Activated T-helper 1 cell treated with anti-CD3 and anti-CD28 coated beads, Interleukin-12 subunit alpha, Interleukin-12 subunit beta, Interleukin-2, Interleukin-4 antibody, amounts not matched to agents 30 ng/mL and 10 ng/mL and 1 ng/mL, durations not matched to agents 14 hours and 24 hours and 36 hours (primary cell): ENCODE measurements at regions of chr4 and their contacts with region 1.

Region 1: DNA sequence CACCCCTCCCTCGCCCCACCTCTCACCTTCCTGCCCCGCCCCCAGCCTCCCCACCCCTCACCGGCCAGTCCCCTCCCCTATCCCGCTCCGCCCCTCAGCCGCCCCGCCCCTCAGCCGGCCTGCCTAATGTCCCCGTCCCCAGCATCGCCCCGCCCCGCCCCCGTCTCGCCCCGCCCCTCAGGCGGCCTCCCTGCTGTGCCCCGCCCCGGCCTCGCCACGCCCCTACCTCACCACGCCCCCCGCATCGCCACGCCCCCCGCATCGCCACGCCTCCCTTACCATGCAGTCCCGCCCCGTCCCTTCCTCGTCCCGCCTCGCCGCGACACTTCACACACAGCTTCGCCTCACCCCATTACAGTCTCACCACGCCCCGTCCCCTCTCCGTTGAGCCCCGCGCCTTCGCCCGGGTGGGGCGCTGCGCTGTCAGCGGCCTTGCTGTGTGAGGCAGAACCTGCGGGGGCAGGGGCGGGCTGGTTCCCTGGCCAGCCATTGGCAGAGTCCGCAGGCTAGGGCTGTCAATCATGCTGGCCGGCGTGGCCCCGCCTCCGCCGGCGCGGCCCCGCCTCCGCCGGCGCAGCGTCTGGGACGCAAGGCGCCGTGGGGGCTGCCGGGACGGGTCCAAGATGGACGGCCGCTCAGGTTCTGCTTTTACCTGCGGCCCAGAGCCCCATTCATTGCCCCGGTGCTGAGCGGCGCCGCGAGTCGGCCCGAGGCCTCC is at the starts of genes HTT and HTT-AS:
- DNase-seq: peak; percentile 90
- H3K4me3 Mint-ChIP-seq: peak within 1 kb of the TSS; percentile 89
- H3K27ac Mint-ChIP-seq: peak within 1 kb of the TSS; percentile 90
- H3K4me1 Mint-ChIP-seq: peaks cover 27% of the 10 kb centered on the region
- H3K27me3 Mint-ChIP-seq: no peaks in the 10 kb centered on the region
- total RNA-seq, gene HTT: 65.9 and 66.9 TPM in 2 replicates
- total RNA-seq, gene HTT-AS: not detected in 2 replicates

Region 2: DNA sequence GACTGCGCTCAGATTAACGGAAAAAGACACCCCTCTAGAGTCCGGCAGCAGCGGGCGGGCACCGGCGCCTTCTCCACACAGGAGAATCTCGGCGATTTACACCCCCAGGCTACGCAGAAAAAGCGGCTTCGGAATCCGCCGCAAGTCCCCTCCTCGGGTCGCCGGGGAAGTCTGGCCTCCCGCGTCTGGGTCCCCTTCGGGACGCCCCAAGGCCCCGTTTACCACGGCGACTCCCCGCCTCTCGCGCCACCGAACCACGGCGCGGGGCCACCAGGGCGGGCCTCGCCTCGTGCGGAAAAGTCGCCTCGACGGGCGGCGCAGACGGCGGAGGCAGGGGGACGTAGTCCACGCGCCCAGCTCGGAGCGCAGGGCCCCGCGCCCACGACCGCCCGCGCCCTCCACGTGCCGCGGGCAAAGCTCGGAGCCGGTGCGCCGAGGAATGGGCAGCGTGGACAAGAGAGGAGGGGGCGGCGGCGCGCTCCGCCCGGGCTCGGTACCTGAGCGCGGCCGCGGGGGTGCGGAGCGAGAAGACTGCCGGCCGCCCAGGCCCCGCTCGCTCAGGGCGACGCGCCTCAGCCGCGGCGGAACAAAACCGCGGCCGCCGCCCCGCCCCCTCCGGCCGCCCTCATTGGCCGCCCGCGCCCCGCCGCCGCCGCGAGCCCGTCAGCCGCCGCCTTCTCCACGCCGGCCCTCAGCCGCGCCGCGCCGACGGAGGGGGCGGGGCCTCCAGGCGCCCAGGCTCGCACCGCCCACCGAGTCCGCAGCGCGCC is 1390.3 kb before region 1 on chr4 and contains the start of gene FAM53A:
- intact Hi-C with region 1: loop called (anchors 5 kb)
- DNase-seq: peak; percentile 93
- H3K4me3 Mint-ChIP-seq: peak within 1 kb of the TSS; percentile 87
- H3K27ac Mint-ChIP-seq: peak within 1 kb of the TSS; percentile 90
- H3K4me1 Mint-ChIP-seq: peaks cover 12% of the 10 kb centered on the region
- H3K27me3 Mint-ChIP-seq: peaks cover 2% of the 10 kb centered on the region
- total RNA-seq, gene FAM53A: 2.5 and 5.5 TPM in 2 replicates

Region 3: DNA sequence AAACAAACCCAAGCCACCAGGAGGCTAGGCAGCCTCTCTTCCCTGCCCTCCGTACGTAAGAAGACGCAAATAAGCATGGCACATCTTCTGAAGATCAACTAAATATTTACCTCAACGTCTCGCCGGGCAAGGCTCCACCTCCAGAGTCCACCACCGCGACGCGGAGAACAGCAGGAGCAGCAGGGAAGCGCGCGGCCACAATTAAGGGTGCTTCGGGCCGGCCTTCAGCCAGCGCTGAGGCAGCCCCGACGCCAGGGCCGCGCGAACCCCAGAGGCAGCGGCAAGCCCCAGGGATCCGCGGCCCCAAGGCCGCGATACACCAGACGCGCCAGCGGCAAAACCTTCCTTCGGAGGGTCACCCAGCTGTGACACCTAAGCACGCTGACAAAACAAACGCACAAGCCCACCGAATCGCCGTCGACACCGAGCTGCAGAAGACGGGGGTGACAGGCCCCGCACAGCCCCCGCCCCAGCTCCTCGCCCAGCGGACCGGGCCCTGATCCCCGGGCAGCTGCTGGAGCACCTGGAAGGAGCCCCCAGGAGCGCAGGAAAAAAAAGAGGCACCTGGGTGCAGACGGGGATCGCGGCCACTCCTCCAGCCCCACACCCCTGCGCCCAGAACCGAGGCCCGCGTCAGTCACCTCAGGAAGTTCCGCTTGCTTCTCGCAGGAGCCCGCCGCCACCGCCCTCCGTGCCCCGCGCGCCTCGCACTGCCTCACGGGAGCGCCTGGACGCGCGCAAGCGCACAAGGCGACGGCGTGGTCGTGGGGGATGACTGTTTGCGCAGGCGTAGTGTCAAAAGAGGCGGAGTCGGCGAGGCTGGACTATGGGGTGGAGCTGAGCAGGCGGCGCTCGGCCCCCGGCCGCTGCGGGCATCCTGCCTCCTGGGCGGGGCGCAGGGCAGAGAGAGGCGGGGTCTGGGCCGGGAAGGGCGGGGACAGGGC is 832.6 kb before region 1 on chr4 and contains the starts of genes HAUS3 and POLN:
- intact Hi-C with region 1: loop called (anchors 1 kb)
- DNase-seq: peak; percentile 100
- H3K4me3 Mint-ChIP-seq: peak within 1 kb of the TSS; percentile 85
- H3K27ac Mint-ChIP-seq: peak within 1 kb of the TSS; percentile 90
- H3K4me1 Mint-ChIP-seq: peaks cover 53% of the 10 kb centered on the region
- H3K27me3 Mint-ChIP-seq: peaks cover 2% of the 10 kb centered on the region
- total RNA-seq, gene HAUS3: 19.2 and 19.9 TPM in 2 replicates
- total RNA-seq, gene POLN: 2.1 and 3.5 TPM in 2 replicates

Region 4: DNA sequence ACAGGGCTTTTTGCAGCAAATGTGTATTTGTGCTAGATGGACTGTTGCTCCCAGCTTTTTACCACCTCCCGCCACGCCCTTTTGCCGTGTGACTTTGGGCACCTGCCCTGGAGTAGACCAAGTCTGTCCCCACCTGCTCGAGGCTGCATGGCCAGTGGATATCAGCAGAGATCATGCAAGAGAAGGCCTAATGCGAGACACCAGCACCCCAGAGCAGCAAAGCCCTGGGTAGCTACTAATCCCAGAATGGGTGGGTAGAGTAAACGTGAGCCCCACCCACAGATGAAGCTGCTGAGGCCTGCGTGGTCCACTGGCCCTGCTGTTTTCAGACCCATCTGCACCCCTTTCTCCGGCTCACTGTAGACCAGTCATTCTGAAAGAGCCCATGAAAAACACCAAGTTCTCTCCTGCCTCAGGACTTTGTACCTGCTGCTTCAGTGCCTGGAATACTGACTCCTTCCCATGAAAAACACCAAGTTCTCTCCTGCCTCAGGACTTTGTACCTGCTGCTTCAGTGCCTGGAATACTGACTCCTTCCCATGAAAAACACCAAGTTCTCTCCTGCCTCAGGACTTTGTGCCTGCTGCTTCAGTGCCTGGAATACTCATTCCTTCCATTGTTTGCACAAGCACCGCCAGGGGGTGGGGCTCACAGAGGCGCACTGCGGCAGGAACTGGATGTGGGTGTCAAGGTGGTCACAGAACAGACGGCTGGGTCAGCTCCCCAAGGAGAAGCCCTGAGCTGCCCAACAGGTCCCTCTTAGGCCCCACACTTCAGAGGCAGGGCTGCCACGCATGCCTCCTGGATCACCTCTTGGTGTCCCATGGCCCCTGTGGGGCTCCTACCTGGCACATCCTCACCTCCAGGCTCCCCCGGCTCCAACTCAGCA is 313.0 kb before region 1 on chr4:
- intact Hi-C with region 1: loop called (anchors 1 kb)
- DNase-seq: no peak
- H3K4me3 Mint-ChIP-seq: no peak overlapping the region
- H3K27ac Mint-ChIP-seq: no peak overlapping the region
- H3K4me1 Mint-ChIP-seq: peaks cover 13% of the 10 kb centered on the region
- H3K27me3 Mint-ChIP-seq: no peaks in the 10 kb centered on the region

Region 5: DNA sequence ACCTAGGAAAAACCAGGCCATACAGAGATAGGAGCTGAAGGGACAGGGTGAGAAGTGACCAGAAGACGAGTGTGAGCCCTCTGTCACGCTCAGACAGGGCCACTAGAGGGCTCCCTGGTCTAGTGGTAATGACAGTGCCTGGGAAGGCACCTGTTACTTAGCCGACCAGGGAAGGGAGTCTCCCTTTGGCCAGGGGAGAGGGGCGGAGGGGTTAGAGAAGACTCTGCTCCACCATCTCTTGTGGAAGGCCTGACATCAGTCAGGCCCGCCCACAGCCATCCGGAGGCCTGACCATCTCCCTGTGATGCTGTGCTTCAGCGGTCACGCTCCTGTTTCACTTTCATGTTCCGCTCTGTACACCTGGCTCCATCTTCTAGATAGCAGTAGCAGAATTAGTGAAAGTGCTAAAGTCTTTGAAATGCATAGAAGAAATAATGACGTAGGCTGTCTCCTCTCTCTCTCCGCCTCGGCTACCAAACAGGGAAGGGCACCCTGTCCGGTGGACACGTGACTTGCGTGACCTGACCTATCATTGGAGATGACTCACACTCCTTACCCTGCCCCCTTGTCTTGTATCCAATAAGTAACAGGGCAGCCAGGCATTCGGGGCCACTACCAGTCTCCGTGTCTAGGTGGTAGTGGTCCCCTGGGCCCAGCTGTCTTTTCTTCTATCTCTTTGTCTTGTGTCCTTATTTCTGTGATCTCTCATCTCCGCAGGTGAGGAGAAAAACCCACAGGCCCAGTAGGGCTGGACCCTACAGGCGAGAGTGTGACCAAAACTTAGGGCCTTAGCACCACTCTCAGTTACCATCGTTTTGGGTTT is 26.6 kb before region 1 on chr4:
- intact Hi-C with region 1: loop called (anchors 1 kb)
- DNase-seq: peak; percentile 80
- H3K4me3 Mint-ChIP-seq: peak overlapping the region; percentile 49
- H3K27ac Mint-ChIP-seq: peak overlapping the region; percentile 48
- H3K4me1 Mint-ChIP-seq: peaks cover 38% of the 10 kb centered on the region
- H3K27me3 Mint-ChIP-seq: peaks cover 26% of the 10 kb centered on the region

Region 6: DNA sequence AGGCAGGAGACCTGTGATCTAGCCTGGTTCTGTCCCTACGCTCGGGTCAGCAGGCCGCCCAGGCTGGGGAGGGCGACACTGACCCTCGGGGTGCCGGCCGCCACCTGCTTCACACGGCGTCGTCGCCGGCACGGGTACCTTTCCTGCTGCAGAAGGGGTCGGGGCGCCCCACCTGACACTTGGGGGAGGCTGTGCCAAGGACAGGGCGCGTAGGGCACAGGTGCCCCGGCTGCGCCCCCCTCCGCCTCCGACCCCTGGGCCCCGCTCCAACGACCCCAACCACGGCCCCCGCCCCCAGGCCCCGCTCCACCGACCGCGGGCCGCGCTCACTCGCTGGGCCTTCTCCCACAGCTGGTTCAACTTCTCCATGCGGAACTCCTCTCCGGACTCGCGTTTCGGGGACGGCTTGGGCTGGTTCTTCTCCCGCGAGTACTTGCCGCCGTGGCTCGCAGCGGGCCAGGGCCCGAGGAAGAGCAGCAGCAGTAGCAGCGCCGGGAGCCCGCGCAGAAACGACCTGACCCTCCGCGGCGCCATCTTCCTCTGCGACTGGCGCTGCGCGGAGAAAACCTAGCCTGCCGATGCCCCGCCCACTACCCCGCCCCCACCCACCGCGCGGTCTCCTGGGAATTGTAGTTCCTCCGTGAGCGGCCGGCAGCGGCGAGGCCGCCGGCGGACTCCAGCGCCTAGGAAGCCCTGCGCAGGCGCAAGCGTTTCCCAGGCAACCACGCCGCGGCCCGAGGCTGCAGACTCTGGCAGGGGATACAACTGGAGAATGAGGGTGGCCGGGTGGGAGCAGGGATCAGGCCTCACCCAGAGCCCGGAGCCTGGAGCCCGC is 457.9 kb after region 1 on chr4 and contains the start of gene LRPAP1:
- intact Hi-C with region 1: loop called (anchors 1 kb)
- DNase-seq: peak; percentile 83
- H3K4me3 Mint-ChIP-seq: peak within 1 kb of the TSS; percentile 99
- H3K27ac Mint-ChIP-seq: peak within 1 kb of the TSS; percentile 95
- H3K4me1 Mint-ChIP-seq: peaks cover 23% of the 10 kb centered on the region
- H3K27me3 Mint-ChIP-seq: peaks cover 10% of the 10 kb centered on the region
- total RNA-seq, gene LRPAP1: 86.4 and 88.1 TPM in 2 replicates